ENCODE measurements at regions of chr14 and their contacts with region 1.

Region 1: GRCh38 chr14:100375963-100376735 is 53.0 kb downstream of the SLC25A47 start:
- DNase-seq: peak; percentile 95
- H3K4me3 Mint-ChIP-seq: peak within 1 kb of the TSS; percentile 96
- H3K27ac Mint-ChIP-seq: peak within 1 kb of the TSS; percentile 99
- H3K4me1 Mint-ChIP-seq: peaks cover 49% of the 10 kb centered on the region
- H3K27me3 Mint-ChIP-seq: no peaks in the 10 kb centered on the region

Region 2: DNA sequence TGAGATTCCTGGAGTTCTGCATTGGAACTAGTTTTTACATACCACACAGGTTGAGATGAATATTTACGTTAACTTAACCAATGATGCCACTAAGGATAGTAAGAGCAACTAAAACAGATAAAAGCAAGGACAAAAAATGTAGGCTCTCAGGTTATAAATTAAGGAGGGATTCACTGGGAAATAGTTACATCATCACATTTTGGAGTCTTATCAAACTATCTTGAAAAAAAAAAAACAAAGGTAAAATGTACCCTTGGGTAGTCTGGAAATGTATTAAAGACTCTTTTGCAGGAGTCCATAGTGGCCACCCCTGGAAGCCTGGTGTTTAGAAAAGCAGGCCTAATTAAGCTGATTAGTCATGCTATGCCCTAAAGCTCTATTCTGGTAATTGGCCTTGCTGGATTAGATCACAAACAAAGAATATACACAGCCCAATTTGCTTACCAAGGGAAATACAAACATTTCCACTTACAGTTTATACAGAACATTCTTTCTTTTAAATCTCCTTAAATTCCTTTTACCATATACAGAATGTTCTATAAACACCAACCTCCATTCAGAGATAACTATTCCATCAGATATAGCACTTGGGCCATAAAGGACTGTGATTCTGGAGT is 13.7 kb before region 1 on chr14:
- CTCF ChIA-PET with region 1: interaction called, 6 read pairs
- POLR2A ChIA-PET with region 1: interaction called, 21 read pairs
- DNase-seq: no peak
- H3K4me3 Mint-ChIP-seq: no peak overlapping the region
- H3K27ac Mint-ChIP-seq: no peak overlapping the region
- H3K4me1 Mint-ChIP-seq: peaks cover 70% of the 10 kb centered on the region
- H3K27me3 Mint-ChIP-seq: no peaks in the 10 kb centered on the region

Region 3: GRCh38 chr14:100392356-100392755 is 16.2 kb after region 1 on chr14:
- CTCF ChIA-PET with region 1: no interaction called
- POLR2A ChIA-PET with region 1: no interaction called
- DNase-seq: no peak
- H3K4me3 Mint-ChIP-seq: no peak overlapping the region
- H3K27ac Mint-ChIP-seq: no peak overlapping the region
- H3K4me1 Mint-ChIP-seq: peaks cover 10% of the 10 kb centered on the region
- H3K27me3 Mint-ChIP-seq: no peaks in the 10 kb centered on the region

Region 4: GRCh38 chr14:100449225-100449987 is 73.3 kb after region 1 on chr14:
- CTCF ChIA-PET with region 1: no interaction called
- POLR2A ChIA-PET with region 1: no interaction called
- DNase-seq: no peak
- H3K4me3 Mint-ChIP-seq: no peak overlapping the region
- H3K27ac Mint-ChIP-seq: no peak overlapping the region
- H3K4me1 Mint-ChIP-seq: peaks cover 9% of the 10 kb centered on the region
- H3K27me3 Mint-ChIP-seq: no peaks in the 10 kb centered on the region

Region 5: GRCh38 chr14:100586403-100587085 is 210.4 kb after region 1 on chr14:
- CTCF ChIA-PET with region 1: no interaction called
- POLR2A ChIA-PET with region 1: no interaction called
- DNase-seq: peak; percentile 26
- H3K4me3 Mint-ChIP-seq: peak overlapping the region; percentile 60
- H3K27ac Mint-ChIP-seq: no peak overlapping the region
- H3K4me1 Mint-ChIP-seq: peaks cover 8% of the 10 kb centered on the region
- H3K27me3 Mint-ChIP-seq: peaks cover 19% of the 10 kb centered on the region